Gastrocnemius medialis (tissue), 4 donors: ENCODE measurements at regions of chr13 and their contacts with region 1.

Region 1: DNA sequence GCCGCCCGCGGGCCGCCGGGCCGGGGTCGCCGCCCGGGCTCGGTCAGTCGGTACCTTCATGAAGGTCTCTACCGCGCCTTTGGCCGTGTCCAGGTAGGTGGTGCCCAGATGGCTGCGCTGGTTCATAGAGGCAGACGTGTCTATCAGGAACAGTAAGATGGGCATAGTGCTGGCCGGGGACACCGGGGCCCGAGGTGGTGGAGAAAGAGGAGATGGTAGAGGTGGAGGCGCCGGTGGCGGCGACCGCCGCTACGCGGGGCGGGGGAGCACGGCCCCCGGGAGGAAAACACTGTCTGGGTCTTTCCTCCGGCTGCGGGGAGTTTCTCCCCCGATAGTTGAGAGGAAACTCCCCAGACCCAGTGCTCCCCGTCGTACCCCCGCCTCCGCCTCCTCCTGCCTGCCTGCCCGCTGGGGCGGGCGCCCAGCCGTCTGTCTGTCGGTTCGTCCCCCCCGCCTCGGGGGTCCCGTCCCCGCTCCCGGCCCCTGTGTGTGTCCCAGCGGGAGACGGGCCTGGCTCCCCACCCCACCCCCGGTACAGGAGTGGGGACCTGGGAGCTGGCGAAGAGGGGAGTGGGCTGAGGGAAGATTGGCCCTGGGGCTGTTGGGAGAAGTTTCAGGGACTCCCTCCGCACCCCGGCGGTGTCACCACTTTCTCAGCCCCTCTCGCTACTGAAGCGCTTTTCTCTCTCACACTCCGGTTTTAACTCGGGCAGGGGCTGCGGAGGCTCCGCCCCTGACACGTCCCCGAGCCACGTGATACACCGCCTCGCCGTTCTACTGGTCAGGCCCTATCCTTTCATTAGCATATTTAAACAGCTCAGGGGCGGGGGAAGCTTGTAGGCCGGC is at the start of gene INTS6:
- DNase-seq: peak; percentile 100
- ATAC-seq: peak; percentile 81 to 87
- H3K4me3 ChIP-seq: peak within 1 kb of the TSS; percentile 82 to 99 (median 96)
- H3K27ac ChIP-seq: peak within 1 kb of the TSS; percentile 100
- H3K4me1 ChIP-seq: peaks cover 23% of the 10 kb centered on the region in 2 donors
- H3K27me3 ChIP-seq: no peaks in the 10 kb centered on the region
- CTCF ChIP-seq: no peak
- POLR2A ChIP-seq: peak; percentile 98 to 99
- total RNA-seq, gene INTS6: 16.5 to 24.4 (median 18.0) TPM

Region 2: GRCh38 chr13:49792550-49793324 is 1659.8 kb before region 1 on chr13 and contains the start of gene KPNA3:
- in situ Hi-C with region 1: no loop called
- intact Hi-C with region 1: loop called (anchors 2 kb)
- DNase-seq: peak; percentile 93 to 96
- ATAC-seq: peak; percentile 82 to 83
- H3K4me3 ChIP-seq: peak within 1 kb of the TSS; percentile 73 to 91 (median 76)
- H3K27ac ChIP-seq: peak within 1 kb of the TSS; percentile 92 to 98 (median 94)
- H3K4me1 ChIP-seq: peaks cover 32 to 36% of the 10 kb centered on the region in 2 donors
- H3K27me3 ChIP-seq: no peaks in the 10 kb centered on the region
- CTCF ChIP-seq: peak in 2 of 5 experiments; percentile 18 to 24
- POLR2A ChIP-seq: peak; percentile 66 to 89
- total RNA-seq, gene KPNA3: 73.3 to 154 (median 113) TPM

Region 3: GRCh38 chr13:51222037-51222685 is 230.4 kb before region 1 on chr13 and contains the start of gene FAM124A:
- in situ Hi-C with region 1: no loop called
- intact Hi-C with region 1: loop called (anchors 10 kb)
- DNase-seq: no peak
- ATAC-seq: peak; percentile 65 to 74
- H3K4me3 ChIP-seq: peak within 1 kb of the TSS; percentile 57 to 79 (median 66)
- H3K27ac ChIP-seq: peak within 1 kb of the TSS in 3 of 4 donors; percentile 4 to 45 (median 31)
- H3K4me1 ChIP-seq: peaks cover 0 to 4% of the 10 kb centered on the region in 2 donors
- H3K27me3 ChIP-seq: no peaks in the 10 kb centered on the region
- CTCF ChIP-seq: peak in 4 of 5 experiments; percentile 24 to 62 (median 39)
- POLR2A ChIP-seq: peak in 1 of 2 donors; percentile 10
- total RNA-seq, gene FAM124A: 0.66 to 2.0 (median 0.81) TPM

Region 4: DNA sequence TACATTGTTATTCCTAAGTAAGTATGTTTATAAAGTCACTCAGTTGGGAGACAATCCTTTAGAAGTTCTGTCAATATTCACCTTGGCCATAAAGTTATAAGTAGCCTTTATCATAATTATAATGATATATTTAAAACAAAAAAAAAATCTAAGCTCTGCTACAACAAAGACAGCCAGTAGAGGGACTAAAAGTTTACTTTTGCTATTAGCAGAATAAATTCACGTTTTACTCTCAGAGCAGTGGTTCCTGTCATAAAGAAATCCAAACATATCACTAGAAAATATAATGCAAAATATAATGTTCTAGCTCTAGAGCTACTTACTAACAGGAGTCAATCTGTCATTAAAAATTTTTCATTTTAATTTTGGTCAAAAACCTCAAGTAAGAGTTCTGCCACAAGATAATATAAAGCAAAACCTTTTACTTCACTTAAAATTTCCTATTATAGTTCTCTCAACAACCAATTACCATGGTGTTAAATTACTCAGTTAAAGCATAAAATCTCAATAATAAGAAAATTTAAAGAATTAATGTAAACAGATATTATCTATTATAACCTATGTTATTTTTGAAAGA is 17.5 kb before region 1 on chr13:
- in situ Hi-C with region 1: no loop called
- intact Hi-C with region 1: loop called (anchors 2 kb)
- DNase-seq: no peak
- ATAC-seq: no peak
- H3K4me3 ChIP-seq: no peak overlapping the region
- H3K27ac ChIP-seq: no peak overlapping the region
- H3K4me1 ChIP-seq: peaks cover 5 to 8% of the 10 kb centered on the region in 2 donors
- H3K27me3 ChIP-seq: no peaks in the 10 kb centered on the region
- CTCF ChIP-seq: peak in 3 of 5 experiments; percentile 29 to 47 (median 47)
- POLR2A ChIP-seq: no peak

Region 5: DNA sequence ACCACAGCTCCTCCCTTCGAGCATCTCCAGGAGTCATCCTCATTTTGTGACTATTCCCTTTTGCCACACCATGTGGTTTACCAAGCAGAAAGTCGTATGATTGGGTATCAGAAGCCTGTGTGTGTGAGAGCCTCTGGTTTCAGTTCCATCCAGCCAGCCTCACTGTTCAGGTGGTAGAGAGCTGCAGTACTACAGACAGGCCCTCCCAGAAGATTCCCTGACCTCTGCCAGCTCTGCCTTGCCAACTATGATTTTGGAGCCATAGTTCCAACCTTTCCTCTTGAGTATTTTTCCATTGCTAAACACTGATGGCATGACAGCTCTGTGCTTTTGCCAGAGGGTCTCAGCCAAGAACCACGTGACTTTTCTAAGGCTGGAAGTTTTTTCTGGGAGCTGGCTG is 268.9 kb after region 1 on chr13:
- in situ Hi-C with region 1: no loop called
- intact Hi-C with region 1: loop called (anchors 5 kb)
- DNase-seq: peak in 1 of 2 donors; percentile 37
- ATAC-seq: peak; percentile 63 to 77
- H3K4me3 ChIP-seq: no peak overlapping the region
- H3K27ac ChIP-seq: peak overlapping the region in 2 of 4 donors; percentile 5 to 19
- H3K4me1 ChIP-seq: peaks cover 0 to 16% of the 10 kb centered on the region in 2 donors
- H3K27me3 ChIP-seq: no peaks in the 10 kb centered on the region
- CTCF ChIP-seq: no peak
- POLR2A ChIP-seq: no peak

Region 6: DNA sequence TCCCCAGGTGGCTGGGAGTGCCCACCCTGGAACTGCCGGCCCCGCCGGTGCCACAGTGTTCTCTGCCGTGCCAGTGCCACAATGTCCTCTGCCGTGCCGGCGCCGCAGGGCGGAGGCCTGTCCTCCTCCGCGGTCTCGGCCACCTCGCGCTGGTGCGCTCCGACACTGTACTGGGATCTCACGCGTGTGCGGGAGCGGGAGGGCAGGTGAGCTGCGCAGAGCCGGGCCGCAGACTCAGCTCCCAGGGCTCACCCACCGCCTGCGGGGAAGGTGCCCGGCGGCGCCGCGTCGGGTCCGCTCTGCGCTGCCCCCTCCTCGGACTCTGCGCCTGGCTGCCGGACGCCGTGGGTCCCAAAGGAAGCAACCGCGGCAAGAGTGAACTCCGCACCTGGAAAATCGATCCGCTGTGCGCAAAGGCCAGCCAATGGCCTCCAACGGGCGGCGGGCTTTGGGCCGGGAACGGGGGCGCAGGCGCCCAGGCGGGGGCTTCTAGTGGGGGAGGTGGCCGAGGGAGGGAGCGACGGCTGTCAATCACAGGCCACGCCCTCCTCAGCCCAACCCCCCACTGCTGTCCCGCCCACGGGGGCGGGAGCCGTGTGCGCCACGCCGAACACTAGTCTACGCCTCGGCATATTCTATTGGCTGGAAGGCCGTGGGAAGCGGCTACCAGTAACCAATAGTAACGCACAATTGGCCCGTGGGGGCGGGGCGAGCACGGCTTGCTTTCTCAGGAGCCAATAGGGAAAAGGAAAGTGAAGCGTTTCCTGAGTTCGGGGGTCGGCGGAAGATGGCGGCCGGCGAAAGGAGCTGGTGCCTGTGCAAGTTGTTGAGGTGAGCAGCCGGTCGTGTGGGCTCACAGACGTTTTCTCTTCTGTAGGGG is 559.3 kb after region 1 on chr13 and contains the start of gene ALG11:
- in situ Hi-C with region 1: no loop called
- intact Hi-C with region 1: loop called (anchors 5 kb)
- DNase-seq: peak; percentile 99
- ATAC-seq: peak; percentile 98
- H3K4me3 ChIP-seq: peak within 1 kb of the TSS; percentile 84 to 92 (median 88)
- H3K27ac ChIP-seq: peak within 1 kb of the TSS; percentile 83 to 90 (median 86)
- H3K4me1 ChIP-seq: peaks cover 24 to 25% of the 10 kb centered on the region in 2 donors
- H3K27me3 ChIP-seq: no peaks in the 10 kb centered on the region
- CTCF ChIP-seq: peak in 1 of 5 experiments; percentile 23
- POLR2A ChIP-seq: peak; percentile 44 to 64
- total RNA-seq, gene ALG11: 8.9 to 14.2 (median 10.1) TPM

Region 7: GRCh38 chr13:52450012-52450792 is 997.6 kb after region 1 on chr13 and contains the start of gene VPS36:
- in situ Hi-C with region 1: no loop called
- intact Hi-C with region 1: loop called (anchors 10 kb)
- DNase-seq: peak; percentile 87 to 93
- ATAC-seq: peak; percentile 82 to 86
- H3K4me3 ChIP-seq: peak within 1 kb of the TSS; percentile 69 to 88 (median 77)
- H3K27ac ChIP-seq: peak within 1 kb of the TSS; percentile 85 to 97 (median 91)
- H3K4me1 ChIP-seq: peaks cover 25 to 28% of the 10 kb centered on the region in 2 donors
- H3K27me3 ChIP-seq: no peaks in the 10 kb centered on the region
- CTCF ChIP-seq: peak; percentile 97 to 100 (median 100)
- POLR2A ChIP-seq: peak; percentile 89 to 91
- total RNA-seq, gene VPS36: 27.1 to 55.7 (median 45.2) TPM

Region 8: GRCh38 chr13:53238261-53238660 is 1785.7 kb after region 1 on chr13:
- in situ Hi-C with region 1: no loop called
- intact Hi-C with region 1: no loop called
- DNase-seq: no peak
- ATAC-seq: no peak
- H3K4me3 ChIP-seq: no peak overlapping the region
- H3K27ac ChIP-seq: no peak overlapping the region
- H3K4me1 ChIP-seq: no peaks in the 10 kb centered on the region
- H3K27me3 ChIP-seq: no peaks in the 10 kb centered on the region
- CTCF ChIP-seq: no peak
- POLR2A ChIP-seq: no peak